Right cardiac atrium (tissue), 5 donors: ENCODE measurements at regions of chr17 and their contacts with region 1.

Region 1: DNA sequence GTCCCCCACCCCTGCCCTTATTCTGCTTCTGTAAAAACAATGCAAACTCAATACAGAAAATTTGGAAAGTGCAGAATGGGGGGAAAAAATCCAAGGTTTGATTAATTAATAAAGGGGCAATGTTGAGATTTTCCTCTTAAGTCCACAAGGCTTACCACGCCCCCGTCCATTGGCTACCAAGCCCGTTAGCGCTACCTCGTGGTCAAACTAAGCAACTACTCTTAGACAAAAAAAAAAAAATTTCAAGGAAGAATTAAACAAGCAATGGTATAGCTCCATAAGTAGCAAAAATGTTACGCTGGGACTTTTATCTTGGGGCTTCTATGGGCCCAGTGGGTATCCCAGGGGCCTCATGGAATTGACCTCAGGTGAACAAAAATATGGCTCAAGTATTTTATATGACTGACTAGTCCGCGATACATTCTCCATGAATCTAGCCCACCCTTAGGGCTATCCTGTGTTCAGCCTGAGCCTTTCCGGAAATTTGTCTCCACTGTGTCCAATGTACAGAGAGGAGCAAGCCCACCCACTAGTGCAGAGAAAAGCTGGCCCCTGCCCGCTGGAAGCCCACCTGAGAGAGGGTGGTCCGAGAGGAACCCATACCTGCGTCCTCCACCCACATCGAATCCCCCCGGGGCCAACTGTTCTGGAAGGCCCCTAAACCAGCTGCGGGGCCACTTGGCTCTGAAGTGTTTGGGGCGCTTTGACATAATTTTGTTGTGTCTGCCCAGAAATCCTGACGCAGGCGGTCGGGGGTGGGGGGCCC is 19.1 kb upstream of the TEX2 start:
- DNase-seq: peak; percentile 58 to 75 (median 62)
- ATAC-seq: peak; percentile 40 to 45
- H3K4me3 ChIP-seq: no peak overlapping the region
- H3K27ac ChIP-seq: no peak overlapping the region
- H3K4me1 ChIP-seq: peaks cover 6% of the 10 kb centered on the region
- H3K27me3 ChIP-seq: no peaks in the 10 kb centered on the region

Region 2: GRCh38 chr17:63919311-63919723 is 362.8 kb before region 1 on chr17:
- intact Hi-C with region 1: loop called in 1 of 4 experiments (anchors 10 kb)
- DNase-seq: peak; percentile 51 to 63 (median 56)
- ATAC-seq: peak; percentile 80 to 88
- H3K4me3 ChIP-seq: no peak overlapping the region
- H3K27ac ChIP-seq: no peak overlapping the region
- H3K4me1 ChIP-seq: no peaks in the 10 kb centered on the region
- H3K27me3 ChIP-seq: no peaks in the 10 kb centered on the region

Region 3: DNA sequence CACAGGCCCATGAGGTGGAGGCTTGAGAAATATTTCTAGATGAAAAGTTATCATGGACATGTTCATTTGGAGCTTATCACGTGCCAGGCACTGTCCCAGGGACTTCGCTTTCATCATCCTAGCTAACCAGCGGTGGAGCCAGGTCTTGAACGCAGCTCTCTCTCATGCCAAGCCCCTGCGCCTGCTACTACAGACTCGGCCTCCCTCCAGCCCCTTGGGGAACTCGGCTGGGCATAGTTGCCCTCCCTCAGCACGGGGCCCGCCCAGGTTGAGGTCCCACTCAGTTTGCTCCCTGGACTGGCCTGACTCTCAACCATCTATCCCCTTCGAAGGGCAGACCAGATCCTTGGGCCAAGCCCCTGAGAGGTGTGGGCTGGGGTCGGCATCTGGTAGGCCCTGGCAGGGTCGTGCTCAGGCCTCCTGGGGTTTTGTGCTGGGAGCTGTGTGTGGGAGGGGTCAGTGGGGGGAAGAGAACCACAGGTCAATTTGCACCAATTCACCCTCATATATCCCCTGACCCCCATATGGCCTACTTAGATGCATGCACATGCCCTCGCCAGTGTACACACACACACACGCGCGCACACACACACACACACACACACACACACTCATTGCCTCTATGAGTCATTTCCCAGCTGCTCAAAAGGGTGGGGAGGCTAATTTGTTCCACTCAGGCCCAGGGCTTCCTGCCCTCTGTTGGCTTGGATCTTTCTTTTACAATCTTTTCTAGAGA is 297.3 kb before region 1 on chr17:
- intact Hi-C with region 1: no loop called
- DNase-seq: peak in 2 of 3 donors; percentile 60 to 63
- ATAC-seq: peak; percentile 53 to 70
- H3K4me3 ChIP-seq: no peak overlapping the region
- H3K27ac ChIP-seq: peak overlapping the region; percentile 0
- H3K4me1 ChIP-seq: peaks cover 8% of the 10 kb centered on the region
- H3K27me3 ChIP-seq: no peaks in the 10 kb centered on the region

Region 4: GRCh38 chr17:64025732-64026294 is 256.3 kb before region 1 on chr17:
- intact Hi-C with region 1: loop called in 2 of 4 experiments (anchors 10 kb)
- DNase-seq: peak; percentile 84 to 93 (median 92)
- ATAC-seq: peak; percentile 69 to 82
- H3K4me3 ChIP-seq: no peak overlapping the region
- H3K27ac ChIP-seq: no peak overlapping the region
- H3K4me1 ChIP-seq: peaks cover 3% of the 10 kb centered on the region
- H3K27me3 ChIP-seq: no peaks in the 10 kb centered on the region

Region 5: DNA sequence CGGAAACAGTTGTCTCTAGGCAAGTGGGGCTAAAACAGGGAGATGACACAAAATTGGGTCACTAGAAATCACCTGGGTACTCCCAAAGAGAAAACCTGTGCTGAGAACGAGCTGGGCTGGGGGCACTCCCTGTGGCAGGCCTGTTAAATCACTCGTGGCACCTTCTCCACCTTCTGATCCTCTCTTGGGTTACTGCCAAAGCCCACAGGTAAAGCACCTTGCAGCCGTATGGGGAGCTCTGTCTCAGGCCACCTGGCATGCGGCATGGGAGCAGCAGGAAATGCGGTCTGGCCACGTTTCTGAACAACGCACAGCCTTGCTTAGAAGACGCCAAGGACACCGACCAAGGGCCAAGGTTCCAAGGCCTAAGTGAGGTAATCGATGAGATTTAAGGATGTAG is 240.2 kb before region 1 on chr17:
- intact Hi-C with region 1: loop called in 1 of 4 experiments (anchors 10 kb)
- DNase-seq: no peak
- ATAC-seq: no peak
- H3K4me3 ChIP-seq: no peak overlapping the region
- H3K27ac ChIP-seq: no peak overlapping the region
- H3K4me1 ChIP-seq: no peaks in the 10 kb centered on the region
- H3K27me3 ChIP-seq: no peaks in the 10 kb centered on the region

Region 6: DNA sequence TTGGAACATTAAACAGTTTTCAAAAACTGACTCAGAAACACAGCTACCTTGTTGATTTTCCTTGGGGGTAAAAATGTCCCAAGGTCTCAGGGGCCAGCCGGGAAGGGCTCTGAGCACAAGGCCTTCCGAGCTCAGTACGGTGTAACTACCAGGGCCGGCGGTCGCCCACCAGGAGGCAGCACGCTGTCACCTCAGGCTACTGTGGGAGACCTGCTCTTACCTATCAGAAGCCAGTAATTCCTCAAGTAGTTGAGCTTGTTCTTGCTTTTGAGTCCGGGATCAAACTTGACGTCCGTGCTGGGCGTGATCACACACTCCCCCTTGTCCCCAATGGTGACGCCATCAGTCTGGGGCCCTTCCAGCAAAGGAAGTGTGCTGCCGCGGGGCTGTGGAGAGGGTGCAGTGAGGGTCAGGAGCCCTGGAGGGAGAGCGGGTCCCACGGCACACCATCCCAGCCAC is 218.3 kb before region 1 on chr17:
- intact Hi-C with region 1: loop called in 1 of 4 experiments (anchors 10 kb)
- DNase-seq: peak; percentile 64 to 86 (median 85)
- ATAC-seq: peak; percentile 77 to 90
- H3K4me3 ChIP-seq: no peak overlapping the region
- H3K27ac ChIP-seq: no peak overlapping the region
- H3K4me1 ChIP-seq: no peaks in the 10 kb centered on the region
- H3K27me3 ChIP-seq: no peaks in the 10 kb centered on the region

Region 7: GRCh38 chr17:64145757-64146417 is 136.3 kb before region 1 on chr17:
- intact Hi-C with region 1: loop called (anchors 5 kb)
- DNase-seq: peak; percentile 97 to 98 (median 98)
- ATAC-seq: peak; percentile 97
- H3K4me3 ChIP-seq: peak overlapping the region; percentile 62
- H3K27ac ChIP-seq: peak overlapping the region; percentile 93
- H3K4me1 ChIP-seq: peaks cover 11% of the 10 kb centered on the region
- H3K27me3 ChIP-seq: no peaks in the 10 kb centered on the region

Region 8: DNA sequence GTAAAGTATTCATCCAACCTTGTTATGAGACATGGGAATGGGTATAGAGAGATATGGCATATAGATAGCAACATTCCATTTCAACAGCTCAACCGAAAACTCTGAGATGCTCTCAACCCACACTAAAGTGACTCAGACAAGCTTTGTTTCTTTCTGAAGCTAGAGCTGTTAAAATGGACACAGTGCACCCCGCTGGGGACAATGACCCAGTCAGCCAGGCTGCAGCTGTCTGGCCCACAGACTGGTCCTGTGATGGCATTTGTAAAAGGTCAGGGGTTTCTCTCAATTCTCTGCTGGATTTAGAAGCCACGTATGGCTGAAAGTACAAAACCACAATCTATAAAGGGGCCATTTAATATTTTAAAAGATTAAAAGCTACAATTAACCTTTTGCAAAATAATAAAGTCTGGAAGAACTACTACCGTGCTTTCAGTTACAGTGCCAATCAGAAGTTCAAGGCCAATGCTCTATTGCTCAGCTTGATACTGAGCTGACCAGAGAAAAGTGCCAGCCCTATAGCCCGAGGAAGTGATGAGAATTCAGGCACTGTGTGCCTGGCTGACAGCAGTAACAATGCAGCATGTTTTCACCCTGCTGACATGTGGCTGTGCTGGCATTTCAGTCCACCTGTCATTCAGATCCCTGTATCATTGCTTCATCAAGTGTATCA is 79.3 kb before region 1 on chr17:
- intact Hi-C with region 1: loop called in 1 of 4 experiments (anchors 10 kb)
- DNase-seq: no peak
- ATAC-seq: peak; percentile 52 to 65
- H3K4me3 ChIP-seq: no peak overlapping the region
- H3K27ac ChIP-seq: peak overlapping the region; percentile 76
- H3K4me1 ChIP-seq: peaks cover 3% of the 10 kb centered on the region
- H3K27me3 ChIP-seq: no peaks in the 10 kb centered on the region